ENCODE measurements at regions of chr15 and their contacts with region 1.

Region 1: DNA sequence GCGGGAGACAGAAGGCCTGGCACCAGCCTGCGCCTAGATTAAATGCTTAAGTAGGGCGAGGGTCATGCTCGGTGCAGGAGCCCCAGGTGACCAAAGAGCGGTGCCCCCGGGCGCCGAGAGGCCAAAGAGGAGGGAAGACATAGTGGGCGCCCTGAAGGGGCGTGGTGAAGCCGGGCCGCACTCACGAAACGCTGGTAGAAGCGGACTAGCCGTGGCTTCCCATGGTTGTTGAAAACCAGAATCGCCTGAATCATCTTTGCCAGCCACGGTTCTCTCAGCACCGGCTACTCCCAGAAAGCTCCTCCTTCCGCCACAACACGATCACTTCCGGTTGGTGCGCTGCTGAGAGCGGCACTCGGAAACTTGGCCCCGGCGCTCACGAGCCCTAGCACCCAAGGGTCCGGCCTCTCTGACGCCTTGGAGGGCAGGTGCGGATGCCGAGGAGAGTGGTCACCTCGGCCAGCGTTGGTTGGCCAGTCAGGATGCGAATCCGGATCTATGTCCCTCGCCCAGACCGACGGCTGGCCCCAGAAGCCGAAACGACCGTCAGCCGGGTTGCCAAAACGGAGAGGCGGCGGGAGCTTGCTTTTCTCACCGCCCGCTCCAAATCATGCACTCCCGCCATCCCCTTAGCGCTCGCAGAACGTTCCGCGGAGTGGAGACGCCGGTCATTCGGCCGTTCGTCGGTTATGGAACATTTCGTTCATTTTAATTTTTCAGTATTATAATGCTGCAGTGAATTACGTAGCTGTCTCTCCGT is at the start of gene AP3S2:
- DNase-seq: peak; percentile 87 to 94
- H3K4me3 ChIP-seq: peak within 1 kb of the TSS; percentile 87
- H3K27ac ChIP-seq: peak within 1 kb of the TSS; percentile 97
- H3K4me1 ChIP-seq: peaks cover 35% of the 10 kb centered on the region
- H3K27me3 ChIP-seq: no peaks in the 10 kb centered on the region
- CTCF ChIP-seq: no peak
- total RNA-seq, gene AP3S2: 49.3 and 57.6 TPM in 2 replicates

Region 2: GRCh38 chr15:89496155-89497098 is 397.4 kb before region 1 on chr15 and contains the start of gene RHCG:
- CTCF ChIA-PET with region 1: no interaction called
- POLR2A ChIA-PET with region 1: no interaction called
- intact Hi-C with region 1: loop called (anchors 5 kb)
- DNase-seq: peak in 1 of 2 experiments; percentile 59
- H3K4me3 ChIP-seq: no peak within 1 kb of the TSS
- H3K27ac ChIP-seq: no peak within 1 kb of the TSS
- H3K4me1 ChIP-seq: peaks cover 43% of the 10 kb centered on the region
- H3K27me3 ChIP-seq: no peaks in the 10 kb centered on the region
- CTCF ChIP-seq: no peak
- total RNA-seq, gene RHCG: 0.26 and 0.60 TPM in 2 replicates

Region 3: GRCh38 chr15:89912674-89913396 is 19.0 kb after region 1 on chr15 and contains the start of gene ARPIN:
- CTCF ChIA-PET with region 1: interaction called, 3 read pairs
- POLR2A ChIA-PET with region 1: no interaction called
- intact Hi-C with region 1: loop called (anchors 2 kb)
- DNase-seq: peak in 1 of 2 experiments; percentile 49
- H3K4me3 ChIP-seq: peak within 1 kb of the TSS; percentile 96
- H3K27ac ChIP-seq: peak within 1 kb of the TSS; percentile 59
- H3K4me1 ChIP-seq: peaks cover 60% of the 10 kb centered on the region
- H3K27me3 ChIP-seq: no peaks in the 10 kb centered on the region
- CTCF ChIP-seq: no peak
- total RNA-seq, gene ARPIN: 28.6 and 30.4 TPM in 2 replicates

Region 4: DNA sequence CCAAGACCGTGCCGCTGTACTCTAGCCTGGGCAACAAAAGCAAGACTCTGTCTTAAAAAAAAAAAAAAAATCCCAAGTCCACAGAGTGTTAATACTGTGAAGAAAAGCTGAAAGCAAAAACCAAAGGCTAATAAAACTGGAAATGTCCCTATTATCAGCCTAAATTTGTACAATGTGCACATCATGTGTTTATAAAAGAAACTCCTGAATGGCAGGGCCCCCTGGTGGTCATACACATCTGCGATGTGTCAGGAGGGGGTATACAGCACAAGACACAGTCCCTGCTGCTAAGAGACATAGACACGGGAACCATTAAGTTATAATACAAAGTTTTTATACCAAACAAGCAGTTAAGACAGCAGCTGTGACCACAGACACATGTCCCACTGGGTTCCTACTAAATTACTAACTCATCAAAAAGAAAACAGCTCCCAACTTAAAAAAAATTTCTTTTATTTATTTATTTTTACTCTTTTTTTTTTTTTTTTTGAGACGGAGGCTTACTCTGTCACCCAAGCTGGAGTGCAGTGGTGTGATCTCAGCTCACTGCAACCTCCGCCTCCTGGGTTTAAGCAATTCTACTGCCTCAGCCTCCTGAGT is 177.4 kb after region 1 on chr15:
- CTCF ChIA-PET with region 1: interaction called, 10 read pairs
- POLR2A ChIA-PET with region 1: no interaction called
- intact Hi-C with region 1: loop called (anchors 1 kb)
- DNase-seq: peak; percentile 54 to 65
- H3K4me3 ChIP-seq: no peak overlapping the region
- H3K27ac ChIP-seq: no peak overlapping the region
- H3K4me1 ChIP-seq: no peaks in the 10 kb centered on the region
- H3K27me3 ChIP-seq: no peaks in the 10 kb centered on the region
- CTCF ChIP-seq: peak; percentile 79

Region 5: DNA sequence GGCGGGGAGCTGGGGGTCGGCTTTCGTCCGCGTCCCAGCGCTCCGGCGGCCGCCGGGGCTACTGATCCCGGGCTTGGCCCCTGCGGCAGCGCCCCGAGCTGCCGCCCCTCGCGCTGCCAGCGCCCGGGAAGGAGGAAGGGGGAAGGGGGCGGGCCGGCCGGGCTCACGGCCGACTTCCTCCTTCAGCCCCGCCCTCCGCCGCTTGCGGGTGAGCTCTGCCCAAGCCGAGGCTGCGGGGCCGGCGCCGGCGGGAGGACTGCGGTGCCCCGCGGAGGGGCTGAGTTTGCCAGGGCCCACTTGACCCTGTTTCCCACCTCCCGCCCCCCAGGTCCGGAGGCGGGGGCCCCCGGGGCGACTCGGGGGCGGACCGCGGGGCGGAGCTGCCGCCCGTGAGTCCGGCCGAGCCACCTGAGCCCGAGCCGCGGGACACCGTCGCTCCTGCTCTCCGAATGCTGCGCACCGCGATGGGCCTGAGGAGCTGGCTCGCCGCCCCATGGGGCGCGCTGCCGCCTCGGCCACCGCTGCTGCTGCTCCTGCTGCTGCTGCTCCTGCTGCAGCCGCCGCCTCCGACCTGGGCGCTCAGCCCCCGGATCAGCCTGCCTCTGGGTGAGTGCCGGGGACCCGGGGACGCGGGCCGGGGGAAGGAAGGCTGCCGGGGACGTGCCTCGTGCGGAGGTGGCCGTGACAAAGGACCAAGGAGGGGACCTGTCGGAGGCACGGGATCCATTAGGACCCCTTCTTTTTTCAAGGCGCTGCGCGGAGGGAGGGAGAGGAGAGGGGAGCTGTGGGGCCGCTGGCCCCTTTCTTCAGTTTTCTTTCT is 307.5 kb after region 1 on chr15 and contains the start of gene SEMA4B:
- CTCF ChIA-PET with region 1: no interaction called
- POLR2A ChIA-PET with region 1: interaction called, 10 read pairs
- intact Hi-C with region 1: no loop called
- DNase-seq: peak; percentile 46 to 65
- H3K4me3 ChIP-seq: peak within 1 kb of the TSS; percentile 71
- H3K27ac ChIP-seq: peak within 1 kb of the TSS; percentile 51
- H3K4me1 ChIP-seq: peaks cover 57% of the 10 kb centered on the region
- H3K27me3 ChIP-seq: no peaks in the 10 kb centered on the region
- CTCF ChIP-seq: no peak
- total RNA-seq, gene SEMA4B: 63.6 and 70.7 TPM in 2 replicates

Region 6: GRCh38 chr15:90265271-90266060 is 371.6 kb after region 1 on chr15 and contains the start of gene NGRN:
- CTCF ChIA-PET with region 1: no interaction called
- POLR2A ChIA-PET with region 1: no interaction called
- intact Hi-C with region 1: loop called (anchors 10 kb)
- DNase-seq: peak; percentile 80 to 85
- H3K4me3 ChIP-seq: peak within 1 kb of the TSS; percentile 82
- H3K27ac ChIP-seq: peak within 1 kb of the TSS; percentile 89
- H3K4me1 ChIP-seq: peaks cover 56% of the 10 kb centered on the region
- H3K27me3 ChIP-seq: no peaks in the 10 kb centered on the region
- CTCF ChIP-seq: no peak
- total RNA-seq, gene NGRN: 57.4 TPM in 2 replicates